ENCODE measurements at regions of chr17 and their contacts with region 1.

Region 1: GRCh38 chr17:78883164-78884122 is 19.6 kb downstream of the CEP295NL start:
- DNase-seq: peak; percentile 96
- H3K4me3 ChIP-seq: peak overlapping the region; percentile 39 to 54 (median 42)
- H3K27ac ChIP-seq: peak overlapping the region; percentile 89 to 95 (median 91)
- H3K4me1 ChIP-seq: peaks cover 79 to 100% (median 93%) of the 10 kb centered on the region in 4 donors
- H3K27me3 ChIP-seq: no peaks in the 10 kb centered on the region
- CTCF ChIP-seq: peak in 2 of 3 experiments; percentile 3 to 6
- EP300 ChIP-seq: no peak
- POLR2A ChIP-seq: no peak

Region 2: GRCh38 chr17:78923660-78924453 is 40.4 kb after region 1 on chr17:
- intact Hi-C with region 1: loop called (anchors 5 kb)
- DNase-seq: no peak
- H3K4me3 ChIP-seq: peak overlapping the region; percentile 81 to 95 (median 91)
- H3K27ac ChIP-seq: peak overlapping the region; percentile 92 to 99 (median 96)
- H3K4me1 ChIP-seq: peaks cover 48 to 83% (median 74%) of the 10 kb centered on the region in 4 donors
- H3K27me3 ChIP-seq: no peaks in the 10 kb centered on the region
- CTCF ChIP-seq: no peak
- EP300 ChIP-seq: no peak
- POLR2A ChIP-seq: no peak

Measured in esophagus muscularis mucosa (tissue), 4 donors.